Activated CD4-positive, alpha-beta T cell treated with anti-CD3 and anti-CD28 coated beads for 36 hours (primary cell): ENCODE measurements at regions of chr1 and their contacts with region 1.

Region 1: GRCh38 chr1:159924981-159925712 is at the start of gene TAGLN2:
- DNase-seq: peak; percentile 94
- ATAC-seq: peak; percentile 69
- H3K4me3 Mint-ChIP-seq: peak within 1 kb of the TSS; percentile 95
- H3K27ac Mint-ChIP-seq: peak within 1 kb of the TSS; percentile 98
- H3K4me1 Mint-ChIP-seq: peaks cover 38% of the 10 kb centered on the region
- H3K27me3 Mint-ChIP-seq: no peaks in the 10 kb centered on the region
- total RNA-seq, gene TAGLN2: 410 to 495 TPM

Region 2: GRCh38 chr1:159071970-159072582 is 853.1 kb before region 1 on chr1:
- CTCF ChIA-PET with region 1: no interaction called
- POLR2A ChIA-PET with region 1: interaction called, 5 read pairs
- intact Hi-C with region 1: loop called in 1 of 2 experiments (anchors 10 kb)
- DNase-seq: no peak
- ATAC-seq: peak; percentile 12
- H3K4me3 Mint-ChIP-seq: peak overlapping the region; percentile 42
- H3K27ac Mint-ChIP-seq: peak overlapping the region; percentile 63
- H3K4me1 Mint-ChIP-seq: peaks cover 52% of the 10 kb centered on the region
- H3K27me3 Mint-ChIP-seq: no peaks in the 10 kb centered on the region

Region 3: DNA sequence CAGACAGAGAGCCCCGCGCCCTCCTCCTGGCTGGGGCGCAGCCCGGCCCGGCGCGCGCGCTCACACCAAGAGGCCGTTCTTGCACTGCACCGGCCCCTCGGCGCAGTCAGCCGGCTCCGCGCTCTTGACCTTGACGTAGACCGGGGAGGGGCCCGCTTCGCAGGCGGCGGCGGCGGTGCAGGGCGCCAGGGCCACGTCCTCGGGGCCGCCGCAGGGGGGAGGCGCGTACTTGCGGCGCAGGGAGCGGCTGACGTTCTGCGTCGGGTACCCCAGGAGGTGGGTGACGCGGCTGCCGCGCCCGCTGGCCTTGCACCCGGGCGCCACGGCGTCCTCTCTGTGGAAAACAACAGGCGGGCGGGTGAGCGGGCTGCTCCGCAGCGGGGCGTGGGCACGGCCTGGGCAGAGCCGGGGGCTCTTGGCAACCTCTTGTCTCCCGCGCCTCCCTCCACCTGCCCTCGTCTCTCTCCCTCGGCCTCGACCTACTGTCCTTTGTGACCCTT is 70.4 kb before region 1 on chr1:
- CTCF ChIA-PET with region 1: interaction called, 3 read pairs
- POLR2A ChIA-PET with region 1: no interaction called
- intact Hi-C with region 1: loop called in 1 of 2 experiments (anchors 2 kb)
- DNase-seq: peak; percentile 87
- ATAC-seq: peak; percentile 96
- H3K4me3 Mint-ChIP-seq: peak overlapping the region; percentile 75
- H3K27ac Mint-ChIP-seq: peak overlapping the region; percentile 58
- H3K4me1 Mint-ChIP-seq: peaks cover 10% of the 10 kb centered on the region
- H3K27me3 Mint-ChIP-seq: no peaks in the 10 kb centered on the region

Region 4: DNA sequence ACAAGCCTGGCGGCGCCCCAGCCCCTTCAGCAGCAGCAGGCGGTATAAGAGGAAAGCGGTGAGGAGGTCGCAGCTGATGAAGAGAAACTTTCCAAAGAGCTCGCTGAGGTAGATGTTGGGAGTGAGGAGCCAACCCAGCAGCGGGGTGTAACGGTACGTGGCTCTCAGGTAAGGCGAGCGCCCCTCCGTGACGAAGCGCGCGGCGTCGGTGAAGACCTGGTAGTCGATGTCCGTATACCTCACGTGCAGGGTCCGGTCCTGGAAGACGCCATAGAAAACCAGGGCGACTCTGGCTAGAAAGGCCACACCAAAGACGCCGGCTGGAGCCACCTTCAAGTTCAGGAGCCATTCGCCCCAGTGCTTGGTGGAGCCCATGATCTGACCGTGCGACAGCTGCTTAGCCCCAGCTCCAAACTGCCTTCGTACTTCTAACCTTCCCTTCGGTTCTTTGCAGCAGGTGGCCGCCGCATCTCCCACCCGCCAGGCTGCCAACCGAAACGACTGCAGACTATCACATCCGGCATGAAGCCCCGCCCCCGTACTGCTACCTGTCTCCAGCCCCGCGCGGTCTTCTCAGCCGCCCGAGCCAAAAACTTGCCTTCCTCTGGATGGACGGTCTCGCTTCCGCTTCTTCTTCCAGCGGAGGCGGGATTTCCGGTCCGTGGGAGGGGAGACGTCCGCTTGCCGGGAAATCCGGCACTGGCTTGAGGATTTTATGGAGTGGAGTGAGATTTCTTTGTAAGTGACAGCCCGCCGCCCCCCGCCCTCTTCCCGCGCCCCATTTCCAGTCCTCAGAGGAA is 106.4 kb after region 1 on chr1 and contains the start of gene PIGM:
- CTCF ChIA-PET with region 1: interaction called, 5 read pairs
- POLR2A ChIA-PET with region 1: interaction called, 8 read pairs
- intact Hi-C with region 1: loop called (anchors 1 kb)
- DNase-seq: peak; percentile 97
- ATAC-seq: peak; percentile 96
- H3K4me3 Mint-ChIP-seq: peak within 1 kb of the TSS; percentile 96
- H3K27ac Mint-ChIP-seq: peak within 1 kb of the TSS; percentile 92
- H3K4me1 Mint-ChIP-seq: peaks cover 34% of the 10 kb centered on the region
- H3K27me3 Mint-ChIP-seq: no peaks in the 10 kb centered on the region
- total RNA-seq, gene PIGM: 4.3 to 4.7 TPM

Region 5: DNA sequence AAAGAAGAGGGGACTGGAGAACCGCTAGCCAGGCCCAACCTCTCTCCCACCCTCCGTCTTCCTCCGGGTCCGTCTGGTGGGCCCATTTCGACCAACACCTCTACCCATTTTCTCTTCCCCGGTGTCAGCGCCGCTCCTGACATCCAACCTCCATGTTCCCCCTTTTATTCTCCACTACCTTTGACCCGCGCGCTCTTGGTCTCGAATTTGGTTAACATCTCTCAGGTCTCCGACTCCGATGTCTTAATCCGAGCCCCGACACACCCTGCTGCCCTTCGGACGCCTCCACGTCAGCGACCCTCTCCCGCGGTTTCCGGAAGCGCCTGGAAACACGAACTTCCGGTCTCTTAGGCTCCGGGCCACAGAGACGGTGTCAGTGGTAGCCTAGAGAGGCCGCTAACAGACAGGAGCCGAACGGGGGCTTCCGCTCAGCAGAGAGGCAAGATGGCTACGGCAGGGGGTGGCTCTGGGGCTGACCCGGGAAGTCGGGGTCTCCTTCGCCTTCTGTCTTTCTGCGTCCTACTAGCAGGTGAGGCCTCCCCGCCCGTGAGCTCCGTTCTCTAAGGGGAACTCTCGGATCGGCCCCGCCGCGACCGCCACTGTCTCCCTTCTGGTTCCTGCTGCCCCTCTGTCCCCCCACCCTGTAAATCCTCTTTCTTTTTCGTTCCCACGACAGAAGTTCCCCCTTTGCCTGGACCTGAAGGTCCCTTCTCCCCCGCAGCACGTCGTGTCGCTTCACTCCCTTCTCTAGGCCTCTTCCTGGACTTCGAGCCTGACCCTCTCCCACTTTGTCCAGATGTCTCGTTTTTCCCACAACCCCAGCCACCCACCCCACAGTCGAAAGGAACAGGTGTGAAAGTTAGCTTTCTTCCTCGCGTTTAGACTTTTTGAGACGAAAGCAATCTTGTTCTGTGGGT is 418.1 kb after region 1 on chr1 and contains the starts of genes COPA and NCSTN:
- CTCF ChIA-PET with region 1: no interaction called
- POLR2A ChIA-PET with region 1: no interaction called
- intact Hi-C with region 1: loop called in 1 of 2 experiments (anchors 2 kb)
- DNase-seq: peak; percentile 94
- ATAC-seq: peak; percentile 99
- H3K4me3 Mint-ChIP-seq: peak within 1 kb of the TSS; percentile 100
- H3K27ac Mint-ChIP-seq: peak within 1 kb of the TSS; percentile 100
- H3K4me1 Mint-ChIP-seq: peaks cover 31% of the 10 kb centered on the region
- H3K27me3 Mint-ChIP-seq: no peaks in the 10 kb centered on the region
- total RNA-seq, gene COPA: 125 to 148 TPM
- total RNA-seq, gene NCSTN: 47.0 to 51.5 TPM

Region 6: DNA sequence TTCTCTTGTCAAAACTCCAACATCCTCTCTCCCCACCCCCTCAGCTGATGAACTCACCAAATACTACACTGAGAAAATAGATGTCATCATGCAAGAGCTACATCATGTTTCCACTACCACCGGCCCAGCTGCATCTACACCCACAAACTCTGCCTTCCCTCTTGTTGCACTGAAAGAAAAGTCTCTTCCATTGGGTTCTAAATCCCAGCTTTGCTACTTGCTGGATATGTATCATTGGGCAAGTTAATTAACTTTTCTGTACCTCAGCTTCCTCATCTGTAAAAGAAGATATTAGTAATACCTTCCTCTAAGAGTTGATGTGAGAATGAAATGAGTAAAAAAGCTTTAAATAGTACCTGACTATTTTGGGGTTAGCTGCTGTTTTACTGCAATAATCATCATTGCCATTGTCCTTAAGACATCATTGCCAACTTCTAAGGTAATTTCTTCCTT is 1989.9 kb after region 1 on chr1:
- CTCF ChIA-PET with region 1: no interaction called
- POLR2A ChIA-PET with region 1: no interaction called
- intact Hi-C with region 1: loop called in 1 of 2 experiments (anchors 5 kb)
- DNase-seq: peak; percentile 73
- ATAC-seq: peak; percentile 82
- H3K4me3 Mint-ChIP-seq: no peak overlapping the region
- H3K27ac Mint-ChIP-seq: no peak overlapping the region
- H3K4me1 Mint-ChIP-seq: peaks cover 34% of the 10 kb centered on the region
- H3K27me3 Mint-ChIP-seq: no peaks in the 10 kb centered on the region